Activated T-helper 2 cell treated with anti-CD3 and anti-CD28 coated beads, Interferon-gamma antibody, Interleukin-2, Interleukin-4, amounts not matched to agents 10 μg/mL and 5 μg/mL and 100 μg/mL, durations not matched to agents 14 hours and 24 hours and 36 hours (primary cell): ENCODE measurements at regions of chr2 and their contacts with region 1.

Region 1: DNA sequence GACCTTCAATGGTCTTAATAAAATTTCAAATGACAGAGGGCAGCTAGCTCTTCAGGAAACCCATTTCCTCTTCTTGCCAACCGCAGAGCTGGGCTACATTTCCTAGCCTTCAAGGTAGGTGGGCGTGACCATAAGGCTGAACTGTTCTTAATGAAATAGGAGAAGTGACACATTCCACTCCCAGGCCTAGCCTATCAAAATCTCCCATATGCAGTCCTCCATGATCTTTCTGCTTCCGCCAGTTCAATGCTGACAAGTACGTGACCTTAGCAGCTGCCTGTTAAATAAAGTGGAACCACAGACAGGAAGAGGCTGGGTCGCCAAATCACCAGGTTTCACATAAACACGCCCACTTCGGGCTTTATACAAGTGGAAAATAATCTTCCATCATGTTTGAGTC is 13.2 kb downstream of the SERPINE2 start:
- DNase-seq: peak; percentile 74
- H3K4me3 Mint-ChIP-seq: peak overlapping the region; percentile 40
- H3K27ac Mint-ChIP-seq: peak overlapping the region; percentile 96
- H3K4me1 Mint-ChIP-seq: peaks cover 56% of the 10 kb centered on the region
- H3K27me3 Mint-ChIP-seq: no peaks in the 10 kb centered on the region

Region 2: GRCh38 chr2:224039124-224039940 is 13.5 kb after region 1 on chr2 and contains the start of gene SERPINE2:
- intact Hi-C with region 1: loop called (anchors 1 kb)
- DNase-seq: peak; percentile 39
- H3K4me3 Mint-ChIP-seq: peak within 1 kb of the TSS; percentile 91
- H3K27ac Mint-ChIP-seq: peak within 1 kb of the TSS; percentile 13
- H3K4me1 Mint-ChIP-seq: peaks cover 21% of the 10 kb centered on the region
- H3K27me3 Mint-ChIP-seq: peaks cover 53% of the 10 kb centered on the region
- total RNA-seq, gene SERPINE2: 18.3 and 19.2 TPM in 2 replicates